Naive thymus-derived CD4-positive, alpha-beta T cell (primary cell): ENCODE measurements at regions of chr2 and their contacts with region 1.

Region 1: DNA sequence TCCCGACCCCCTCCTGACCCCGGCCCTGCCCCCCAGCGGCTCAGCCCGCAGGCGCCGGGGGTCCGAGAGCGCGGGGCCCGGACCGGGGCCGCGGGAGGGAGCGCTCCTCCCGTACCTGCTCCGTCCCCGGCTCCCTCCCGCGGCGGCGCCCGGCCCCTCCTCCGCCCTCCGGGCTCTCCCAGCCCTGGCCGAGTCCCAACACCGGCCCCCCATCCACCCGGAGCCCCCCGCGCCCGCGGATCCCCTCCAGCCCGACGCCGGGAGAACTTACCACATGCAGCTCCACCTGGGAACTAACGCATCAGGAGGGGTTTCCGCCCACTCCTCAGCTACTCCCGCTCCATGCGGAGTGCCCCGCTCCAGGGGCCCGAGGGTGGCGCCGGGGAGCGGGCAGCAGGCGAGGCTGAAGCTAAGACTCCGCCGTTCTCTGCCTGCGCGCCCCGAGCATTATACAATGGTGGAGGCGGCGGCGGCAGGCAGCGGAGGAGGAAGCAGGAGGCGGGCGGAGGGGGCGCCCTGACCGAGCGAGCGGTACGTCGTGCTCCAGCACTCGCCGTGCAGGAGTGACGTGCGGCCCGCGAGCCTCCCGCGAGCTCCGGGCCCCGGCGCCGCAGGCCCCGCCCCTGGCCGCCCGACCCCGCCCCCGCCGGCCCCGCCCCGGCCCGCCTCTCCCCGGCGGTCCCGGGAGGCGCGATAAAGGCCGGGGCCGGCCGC is at the start of gene SERTAD2:
- DNase-seq: peak; percentile 80 to 89 (median 86)
- ATAC-seq: peak; percentile 93
- H3K4me3 ChIP-seq: peak within 1 kb of the TSS; percentile 66
- H3K4me3 Mint-ChIP-seq: peak within 1 kb of the TSS; percentile 84 to 99 (median 96)
- H3K27ac ChIP-seq: peak within 1 kb of the TSS; percentile 90
- H3K27ac Mint-ChIP-seq: peak within 1 kb of the TSS; percentile 81 to 98 (median 94)
- H3K4me1 ChIP-seq: peaks cover 8 to 45% of the 10 kb centered on the region in 2 donors
- H3K4me1 Mint-ChIP-seq: peaks cover 44 to 84% (median 80%) of the 10 kb centered on the region in 7 donors
- H3K27me3 ChIP-seq: no peaks in the 10 kb centered on the region
- H3K27me3 Mint-ChIP-seq: no peaks in the 10 kb centered on the region
- total RNA-seq, gene SERTAD2: 34.3 to 43.8 (median 40.1) TPM

Region 2: DNA sequence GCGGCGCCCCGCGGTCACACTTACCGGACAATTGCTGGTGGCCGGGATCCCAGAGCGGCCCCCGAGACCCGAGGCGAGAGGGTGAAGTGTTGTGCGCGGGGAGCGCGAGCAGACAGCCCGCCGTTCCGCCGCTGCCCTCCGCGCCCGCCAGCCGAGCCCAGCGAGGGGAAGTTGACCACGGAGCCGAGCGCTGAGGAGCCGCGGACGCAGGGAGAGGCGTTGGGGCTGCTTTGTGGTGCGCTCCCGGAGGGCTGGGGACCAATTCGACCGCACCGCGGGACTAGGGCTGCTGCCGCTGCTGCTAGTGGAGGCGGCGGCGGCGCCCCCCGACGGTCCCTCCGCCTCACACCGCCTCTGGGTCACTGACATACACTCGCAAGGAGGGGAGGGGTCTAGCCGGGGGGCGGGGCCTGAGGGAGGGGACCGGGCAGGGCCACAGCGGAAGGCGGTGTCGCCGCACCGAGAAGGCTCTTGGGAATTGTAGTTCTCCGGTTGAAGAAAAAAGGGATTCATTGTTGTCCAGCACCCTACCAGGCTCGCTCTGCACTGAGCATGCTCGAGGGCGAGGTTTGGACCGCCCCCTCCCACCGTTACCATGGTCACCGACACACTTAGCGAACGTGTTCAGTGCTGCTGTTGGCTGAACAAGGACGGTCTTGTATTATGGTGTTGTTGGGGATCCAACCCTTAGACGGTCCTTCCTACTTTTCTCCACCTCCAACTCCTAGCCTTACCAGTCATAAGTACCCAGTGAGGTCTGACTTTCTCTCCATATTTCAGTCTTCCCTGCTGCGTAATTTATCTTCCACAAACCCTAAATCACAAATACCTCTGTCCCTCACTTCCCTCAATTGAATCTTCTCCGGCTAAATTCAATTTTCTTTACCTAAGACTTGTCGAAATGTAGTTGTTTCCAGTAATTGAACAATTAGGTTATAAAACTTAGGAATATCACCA is 509.2 kb before region 1 on chr2 and contains the start of gene PELI1:
- CTCF ChIA-PET with region 1: no interaction called
- POLR2A ChIA-PET with region 1: interaction called, 3 read pairs
- intact Hi-C with region 1: loop called (anchors 2 to 10 kb)
- DNase-seq: peak; percentile 82 to 95 (median 88)
- ATAC-seq: peak; percentile 97
- H3K4me3 ChIP-seq: peak within 1 kb of the TSS; percentile 88
- H3K4me3 Mint-ChIP-seq: peak within 1 kb of the TSS in 9 of 10 donors; percentile 87 to 98 (median 93)
- H3K27ac ChIP-seq: peak within 1 kb of the TSS; percentile 98
- H3K27ac Mint-ChIP-seq: peak within 1 kb of the TSS; percentile 93 to 99 (median 96)
- H3K4me1 ChIP-seq: peaks cover 11 to 24% of the 10 kb centered on the region in 2 donors
- H3K4me1 Mint-ChIP-seq: peaks cover 19 to 33% (median 31%) of the 10 kb centered on the region in 7 donors
- H3K27me3 ChIP-seq: no peaks in the 10 kb centered on the region
- H3K27me3 Mint-ChIP-seq: no peaks in the 10 kb centered on the region
- total RNA-seq, gene PELI1: 33.4 to 170 (median 57.2) TPM

Region 3: DNA sequence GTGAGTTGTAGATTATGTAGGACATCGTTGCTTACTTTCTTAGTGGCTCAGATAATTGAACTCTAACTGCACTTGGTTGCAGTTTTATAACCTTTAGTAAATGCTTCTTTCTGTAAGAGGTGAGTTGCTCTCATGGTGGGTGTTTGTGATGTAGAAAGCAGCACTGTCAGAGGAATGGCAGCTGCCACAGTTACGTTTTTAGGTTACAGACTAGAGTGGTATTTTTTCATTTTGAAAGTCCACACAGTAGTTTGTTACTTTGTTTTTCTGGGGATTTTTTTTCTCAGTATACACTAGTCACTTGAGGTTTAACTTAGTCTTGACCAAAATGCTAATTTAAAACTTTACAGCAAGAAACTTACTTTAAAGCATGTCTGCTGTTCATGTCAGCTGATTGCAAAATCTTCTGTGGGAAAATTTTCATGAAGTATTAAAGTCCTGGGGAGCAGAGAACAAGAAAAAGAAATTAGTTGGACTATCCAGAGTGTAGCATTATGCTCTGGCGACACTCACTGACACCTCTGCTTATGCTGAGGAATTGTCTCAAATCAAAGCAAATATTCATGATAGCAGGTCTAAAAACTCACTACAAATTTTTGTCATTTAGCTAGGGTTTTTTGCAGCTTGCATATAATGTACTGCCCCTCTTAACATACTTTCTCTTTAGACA is 114.6 kb before region 1 on chr2:
- CTCF ChIA-PET with region 1: no interaction called
- POLR2A ChIA-PET with region 1: no interaction called
- intact Hi-C with region 1: no loop called
- DNase-seq: no peak
- ATAC-seq: no peak
- H3K4me3 ChIP-seq: no peak overlapping the region
- H3K4me3 Mint-ChIP-seq: no peak overlapping the region
- H3K27ac ChIP-seq: no peak overlapping the region
- H3K27ac Mint-ChIP-seq: no peak overlapping the region
- H3K4me1 ChIP-seq: peaks cover 4 to 12% of the 10 kb centered on the region in 2 donors
- H3K4me1 Mint-ChIP-seq: peaks cover 36 to 88% (median 68%) of the 10 kb centered on the region in 7 donors
- H3K27me3 ChIP-seq: no peaks in the 10 kb centered on the region
- H3K27me3 Mint-ChIP-seq: no peaks in the 10 kb centered on the region

Region 4: GRCh38 chr2:64609227-64609941 is 44.1 kb before region 1 on chr2:
- CTCF ChIA-PET with region 1: no interaction called
- POLR2A ChIA-PET with region 1: interaction called, 14 read pairs
- intact Hi-C with region 1: loop called in 1 of 2 experiments (anchors 2 kb)
- DNase-seq: peak; percentile 49 to 85 (median 78)
- ATAC-seq: peak; percentile 81
- H3K4me3 ChIP-seq: peak overlapping the region; percentile 66
- H3K4me3 Mint-ChIP-seq: peak overlapping the region; percentile 61 to 86 (median 72)
- H3K27ac ChIP-seq: peak overlapping the region; percentile 64
- H3K27ac Mint-ChIP-seq: peak overlapping the region in 8 of 9 donors; percentile 51 to 82 (median 66)
- H3K4me1 ChIP-seq: peaks cover 17 to 27% of the 10 kb centered on the region in 2 donors
- H3K4me1 Mint-ChIP-seq: peaks cover 0 to 33% (median 21%) of the 10 kb centered on the region in 7 donors
- H3K27me3 ChIP-seq: no peaks in the 10 kb centered on the region
- H3K27me3 Mint-ChIP-seq: peaks cover 0 to 24% (median 0%) of the 10 kb centered on the region in 5 donors

Region 5: DNA sequence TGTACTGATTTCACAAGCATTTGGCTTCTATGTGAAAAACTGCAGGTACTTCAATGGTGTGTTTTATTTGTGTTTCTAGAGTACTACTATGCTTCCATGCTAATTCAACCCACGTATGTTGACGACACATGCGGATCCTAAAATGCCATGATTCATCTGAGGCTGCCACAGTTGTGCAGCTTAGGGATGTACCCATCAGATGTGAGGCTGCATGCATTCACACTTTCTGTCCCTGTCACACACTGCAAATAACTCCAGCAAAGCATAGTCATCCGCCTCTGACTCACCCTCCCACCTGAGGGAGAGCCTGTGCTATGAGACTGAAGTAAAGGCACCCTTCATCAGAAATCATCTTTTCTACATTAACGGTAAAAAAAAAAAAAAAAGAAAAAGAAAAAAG is 22.4 kb after region 1 on chr2:
- CTCF ChIA-PET with region 1: interaction called, 9 read pairs
- POLR2A ChIA-PET with region 1: interaction called, 33 read pairs
- intact Hi-C with region 1: loop called in 1 of 2 experiments (anchors 2 kb)
- DNase-seq: peak in 2 of 9 donors; percentile 19 to 71
- ATAC-seq: peak; percentile 46
- H3K4me3 ChIP-seq: no peak overlapping the region
- H3K4me3 Mint-ChIP-seq: peak overlapping the region in 4 of 10 donors; percentile 4 to 35 (median 14)
- H3K27ac ChIP-seq: no peak overlapping the region
- H3K27ac Mint-ChIP-seq: peak overlapping the region in 5 of 9 donors; percentile 9 to 80 (median 59)
- H3K4me1 ChIP-seq: peaks cover 0 to 19% of the 10 kb centered on the region in 2 donors
- H3K4me1 Mint-ChIP-seq: peaks cover 9 to 88% (median 47%) of the 10 kb centered on the region in 7 donors
- H3K27me3 ChIP-seq: no peaks in the 10 kb centered on the region
- H3K27me3 Mint-ChIP-seq: no peaks in the 10 kb centered on the region

Region 6: GRCh38 chr2:64730551-64731262 is 77.2 kb after region 1 on chr2:
- CTCF ChIA-PET with region 1: interaction called, 11 read pairs
- POLR2A ChIA-PET with region 1: interaction called, 205 read pairs
- intact Hi-C with region 1: loop called (anchors 1 kb)
- DNase-seq: peak in 8 of 9 donors; percentile 41 to 72 (median 51)
- ATAC-seq: peak; percentile 80
- H3K4me3 ChIP-seq: peak overlapping the region; percentile 66
- H3K4me3 Mint-ChIP-seq: peak overlapping the region; percentile 80 to 95 (median 88)
- H3K27ac ChIP-seq: peak overlapping the region; percentile 71
- H3K27ac Mint-ChIP-seq: peak overlapping the region; percentile 95 to 99 (median 98)
- H3K4me1 ChIP-seq: peaks cover 31 to 32% of the 10 kb centered on the region in 2 donors
- H3K4me1 Mint-ChIP-seq: peaks cover 26 to 80% (median 71%) of the 10 kb centered on the region in 7 donors
- H3K27me3 ChIP-seq: no peaks in the 10 kb centered on the region
- H3K27me3 Mint-ChIP-seq: no peaks in the 10 kb centered on the region

Region 7: DNA sequence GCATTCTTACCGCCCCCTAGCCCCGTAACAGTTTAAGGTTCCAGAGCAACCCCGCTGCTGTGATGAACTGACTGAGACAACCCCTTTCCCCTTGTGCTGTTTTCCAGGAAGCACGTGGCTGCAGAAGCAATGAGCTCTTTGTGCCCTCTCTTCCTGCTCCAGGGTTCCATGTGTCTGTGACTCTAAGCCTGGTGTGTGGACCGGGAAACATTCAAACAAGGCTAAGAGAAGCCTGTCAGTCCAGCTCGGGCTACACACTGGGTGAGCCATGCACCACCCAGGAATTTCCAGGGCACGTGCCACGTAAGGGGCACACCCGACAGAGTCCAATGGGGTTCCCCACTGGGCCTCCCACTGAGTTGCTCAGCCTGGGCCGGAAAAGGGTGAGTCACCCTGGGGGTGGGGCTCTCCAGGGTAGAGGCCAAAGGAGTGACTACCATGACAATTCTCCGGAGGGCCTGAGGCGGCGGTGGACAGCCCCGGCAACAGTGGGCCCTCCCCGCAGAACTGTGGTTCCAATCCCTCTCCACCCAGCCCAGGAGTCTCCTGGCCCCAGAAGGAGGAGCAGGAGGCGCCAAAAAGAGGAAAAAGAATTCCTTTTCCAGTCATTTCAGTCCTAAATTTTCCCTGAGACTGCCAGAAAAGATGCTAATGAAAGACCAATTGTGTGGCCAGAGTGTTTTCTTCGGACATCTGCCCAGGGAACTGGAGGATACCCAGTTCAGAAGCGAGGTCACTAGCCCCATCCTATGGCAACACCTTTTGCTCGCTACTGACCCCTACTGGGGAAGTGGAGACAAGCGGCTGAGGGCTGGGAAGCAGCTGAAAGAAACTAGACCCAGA is 177.8 kb after region 1 on chr2:
- CTCF ChIA-PET with region 1: interaction called, 117 read pairs
- POLR2A ChIA-PET with region 1: interaction called, 61 read pairs
- intact Hi-C with region 1: no loop called
- DNase-seq: peak; percentile 61 to 89 (median 78)
- ATAC-seq: peak; percentile 95
- H3K4me3 ChIP-seq: peak overlapping the region; percentile 7
- H3K4me3 Mint-ChIP-seq: peak overlapping the region in 1 of 10 donors; percentile 8
- H3K27ac ChIP-seq: no peak overlapping the region
- H3K27ac Mint-ChIP-seq: peak overlapping the region in 1 of 9 donors; percentile 72
- H3K4me1 ChIP-seq: peaks cover 0 to 9% of the 10 kb centered on the region in 2 donors
- H3K4me1 Mint-ChIP-seq: peaks cover 0 to 25% (median 4%) of the 10 kb centered on the region in 7 donors
- H3K27me3 ChIP-seq: no peaks in the 10 kb centered on the region
- H3K27me3 Mint-ChIP-seq: peaks cover 0 to 9% (median 4%) of the 10 kb centered on the region in 5 donors

Region 8: DNA sequence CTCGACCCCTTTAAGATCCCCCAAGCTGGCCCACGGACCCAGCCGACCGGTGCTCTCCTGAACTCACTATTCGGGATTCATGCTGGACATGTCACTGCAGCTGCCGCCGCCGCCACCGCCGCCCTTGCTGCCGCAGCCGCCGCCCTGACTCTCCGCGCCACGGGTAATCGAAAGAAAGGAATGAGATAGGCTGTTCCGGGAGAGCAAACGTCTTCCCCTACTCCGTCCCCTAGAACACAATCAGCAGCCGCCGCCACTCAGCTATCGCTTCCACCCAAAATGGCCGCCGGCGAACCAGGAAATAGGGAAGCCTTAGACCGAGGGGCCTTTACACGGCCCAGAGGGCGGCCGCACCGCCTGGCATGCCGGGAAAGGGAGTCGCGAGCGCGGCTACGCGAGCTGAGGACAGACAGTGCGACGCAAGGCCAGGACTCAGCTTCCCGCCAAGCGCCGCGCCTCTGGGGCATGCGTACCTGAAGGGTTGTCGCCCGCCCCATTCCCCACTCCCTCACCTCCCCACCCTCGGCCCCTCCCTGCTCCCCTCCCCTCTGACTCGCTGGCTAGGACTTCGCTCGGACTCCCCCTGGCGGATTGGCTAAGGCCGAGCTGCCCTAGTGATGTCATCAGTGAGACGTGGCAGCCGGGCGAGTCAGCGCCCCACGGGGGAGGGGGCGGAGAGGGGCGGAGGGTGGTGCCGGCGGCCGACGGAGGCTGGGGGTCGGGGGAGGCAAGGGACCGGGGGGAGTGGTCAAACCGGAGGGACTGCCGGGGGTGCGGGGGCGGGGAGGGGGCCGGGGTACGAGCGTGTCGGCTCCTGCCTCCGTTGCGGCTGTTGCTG is 476.5 kb after region 1 on chr2 and contains the start of gene RAB1A:
- CTCF ChIA-PET with region 1: no interaction called
- POLR2A ChIA-PET with region 1: no interaction called
- intact Hi-C with region 1: loop called in 1 of 2 experiments (anchors 1 kb)
- DNase-seq: peak; percentile 91 to 99 (median 98)
- ATAC-seq: peak; percentile 94
- H3K4me3 ChIP-seq: peak within 1 kb of the TSS; percentile 78
- H3K4me3 Mint-ChIP-seq: peak within 1 kb of the TSS; percentile 90 to 100 (median 98)
- H3K27ac ChIP-seq: peak within 1 kb of the TSS; percentile 98
- H3K27ac Mint-ChIP-seq: peak within 1 kb of the TSS; percentile 95 to 100 (median 99)
- H3K4me1 ChIP-seq: peaks cover 24 to 25% of the 10 kb centered on the region in 2 donors
- H3K4me1 Mint-ChIP-seq: peaks cover 24 to 47% (median 35%) of the 10 kb centered on the region in 7 donors
- H3K27me3 ChIP-seq: no peaks in the 10 kb centered on the region
- H3K27me3 Mint-ChIP-seq: peaks cover 0 to 17% (median 0%) of the 10 kb centered on the region in 5 donors
- total RNA-seq, gene RAB1A: 48.8 to 78.6 (median 65.8) TPM